GM12878 (cell line): ENCODE measurements at regions of chr20 and their contacts with region 1.

Region 1: GRCh38 chr20:37534401-37535157 is 6.9 kb upstream of the BLCAP start:
- DNase-seq: peak; percentile 90
- ATAC-seq: peak; percentile 98
- H3K4me3 ChIP-seq: no peak overlapping the region
- H3K27ac ChIP-seq: peak overlapping the region; percentile 57
- H3K4me1 ChIP-seq: peaks cover 18% of the 10 kb centered on the region
- H3K27me3 ChIP-seq: no peaks in the 10 kb centered on the region
- CTCF ChIP-seq: peak; percentile 69 to 88 (median 77)
- EP300 ChIP-seq: peak; percentile 47 to 59; a peak in 2 of 4 replicates
- POLR2A ChIP-seq: no peak
- RAD21 ChIP-seq: peak; percentile 97

Region 2: DNA sequence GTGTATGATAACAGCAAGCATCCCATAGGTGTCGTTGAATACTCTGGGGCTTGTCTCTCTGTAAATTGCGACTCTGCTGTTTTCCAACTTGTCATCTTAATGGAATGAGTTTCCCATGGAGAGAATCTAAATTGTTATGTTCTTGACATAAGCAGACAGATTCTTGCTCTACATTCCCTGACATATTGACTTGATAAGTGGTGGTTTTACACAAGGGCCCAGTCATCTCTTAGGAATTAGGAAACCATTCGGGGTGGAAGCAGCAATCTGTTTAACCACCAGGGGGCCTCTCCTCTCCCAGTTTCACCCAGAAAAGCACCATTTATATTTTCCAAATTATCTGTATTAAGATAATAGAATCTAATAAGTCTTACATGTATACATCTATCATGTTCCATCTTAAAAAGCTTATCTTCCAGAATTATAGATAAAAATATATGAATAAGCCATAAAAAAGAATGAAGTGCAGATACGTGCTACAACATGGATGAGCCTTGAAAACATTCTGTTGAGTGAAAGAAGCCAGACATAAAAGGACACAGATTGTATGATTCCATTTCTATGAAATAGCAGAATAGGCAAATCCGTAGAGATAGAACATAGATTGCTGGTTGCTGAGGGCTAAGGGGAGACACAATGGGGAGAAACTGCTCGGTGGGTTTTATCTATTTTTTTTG is 332.2 kb before region 1 on chr20:
- CTCF ChIA-PET with region 1: interaction called, 200 read pairs
- POLR2A ChIA-PET with region 1: no interaction called
- RAD21 ChIA-PET with region 1: interaction called, 4 read pairs
- SMC1A ChIA-PET with region 1: interaction called, 7 read pairs
- in situ Hi-C with region 1: loop called (anchors 5 kb)
- intact Hi-C with region 1: loop called (anchors 1 kb)
- DNase-seq: no peak
- ATAC-seq: peak; percentile 59; the same call in 2 of the 3 replicates
- H3K4me3 ChIP-seq: no peak overlapping the region
- H3K27ac ChIP-seq: no peak overlapping the region
- H3K4me1 ChIP-seq: no peaks in the 10 kb centered on the region
- H3K27me3 ChIP-seq: no peaks in the 10 kb centered on the region
- CTCF ChIP-seq: peak; percentile 43 to 62 (median 56)
- EP300 ChIP-seq: no peak
- POLR2A ChIP-seq: no peak
- RAD21 ChIP-seq: no peak

Region 3: DNA sequence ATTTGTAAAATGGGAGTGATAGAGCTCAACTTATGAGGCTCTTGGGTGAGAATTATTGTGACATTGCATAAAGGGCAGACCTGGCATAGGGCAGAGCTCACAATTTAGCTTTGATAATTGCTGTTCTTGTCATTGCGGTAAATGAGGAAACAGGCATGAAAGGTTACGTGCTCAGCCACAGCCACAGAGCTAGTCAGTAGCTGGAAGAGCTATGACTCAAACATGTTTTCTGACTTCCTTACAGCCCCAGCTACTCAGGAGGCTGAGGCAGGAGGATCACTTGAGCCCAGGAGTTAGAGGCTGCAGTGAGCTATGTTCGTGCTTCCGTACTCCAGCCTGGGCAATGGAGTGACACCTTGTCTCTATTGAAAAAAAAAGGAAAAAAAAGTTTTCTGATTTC is 269.4 kb before region 1 on chr20:
- CTCF ChIA-PET with region 1: interaction called, 282 read pairs
- POLR2A ChIA-PET with region 1: interaction called, 5 read pairs
- RAD21 ChIA-PET with region 1: interaction called, 119 read pairs
- SMC1A ChIA-PET with region 1: interaction called, 129 read pairs
- in situ Hi-C with region 1: loop called (anchors 5 kb)
- intact Hi-C with region 1: loop called (anchors 1 kb)
- DNase-seq: no peak
- ATAC-seq: peak; percentile 87
- H3K4me3 ChIP-seq: no peak overlapping the region
- H3K27ac ChIP-seq: no peak overlapping the region
- H3K4me1 ChIP-seq: peaks cover 14% of the 10 kb centered on the region
- H3K27me3 ChIP-seq: no peaks in the 10 kb centered on the region; a peak in 1 of 4 replicates
- CTCF ChIP-seq: no peak
- EP300 ChIP-seq: 0 out of 4 replicates have a peak, but pooled peaks of 1 of the 2 experiments have one; percentile 51
- POLR2A ChIP-seq: no peak
- RAD21 ChIP-seq: no peak

Region 4: GRCh38 chr20:37457921-37458320 is 76.7 kb before region 1 on chr20:
- CTCF ChIA-PET with region 1: no interaction called
- POLR2A ChIA-PET with region 1: no interaction called
- RAD21 ChIA-PET with region 1: no interaction called
- SMC1A ChIA-PET with region 1: no interaction called
- in situ Hi-C with region 1: no loop called
- intact Hi-C with region 1: no loop called
- DNase-seq: no peak
- ATAC-seq: no peak
- H3K4me3 ChIP-seq: no peak overlapping the region
- H3K27ac ChIP-seq: no peak overlapping the region
- H3K4me1 ChIP-seq: no peaks in the 10 kb centered on the region
- H3K27me3 ChIP-seq: peaks cover 0 to 2% of the 10 kb centered on the region in 2 experiments; a peak in 1 of 4 replicates
- CTCF ChIP-seq: no peak
- EP300 ChIP-seq: no peak
- POLR2A ChIP-seq: no peak
- RAD21 ChIP-seq: no peak

Region 5: GRCh38 chr20:37510226-37510625 is 24.4 kb before region 1 on chr20:
- CTCF ChIA-PET with region 1: interaction called, 11 read pairs
- POLR2A ChIA-PET with region 1: no interaction called
- RAD21 ChIA-PET with region 1: no interaction called
- SMC1A ChIA-PET with region 1: no interaction called
- in situ Hi-C with region 1: no loop called
- intact Hi-C with region 1: no loop called
- DNase-seq: no peak
- ATAC-seq: no peak
- H3K4me3 ChIP-seq: no peak overlapping the region
- H3K27ac ChIP-seq: no peak overlapping the region
- H3K4me1 ChIP-seq: 0 out of 2 replicates have a peak, but pooled peaks cover 3% of the 10 kb centered on the region
- H3K27me3 ChIP-seq: no peaks in the 10 kb centered on the region
- CTCF ChIP-seq: no peak
- EP300 ChIP-seq: no peak
- POLR2A ChIP-seq: no peak
- RAD21 ChIP-seq: no peak

Region 6: DNA sequence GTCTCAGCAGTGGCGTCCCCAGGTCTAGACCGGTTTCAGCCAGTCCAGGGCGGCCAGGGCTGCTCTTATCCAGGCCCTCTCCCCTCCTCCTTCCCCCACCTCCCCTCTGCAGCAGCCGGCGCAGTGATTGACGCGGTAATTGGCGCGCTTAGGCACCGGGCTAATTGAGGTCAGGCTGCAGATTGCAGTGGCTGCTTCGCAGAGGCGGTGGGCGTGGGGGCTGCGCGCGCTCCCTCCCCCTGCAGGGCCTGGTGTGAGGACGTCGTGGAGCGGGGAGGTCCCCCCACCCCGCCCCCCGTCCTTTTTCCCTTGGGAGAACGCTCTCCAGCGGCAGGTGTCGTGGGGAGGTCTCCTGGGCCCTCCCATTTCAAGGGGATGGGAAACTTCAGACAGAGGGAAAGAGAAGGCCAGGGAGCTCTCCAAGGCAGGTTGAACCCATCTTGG is 63.5 kb after region 1 on chr20:
- CTCF ChIA-PET with region 1: no interaction called
- POLR2A ChIA-PET with region 1: no interaction called
- RAD21 ChIA-PET with region 1: no interaction called
- SMC1A ChIA-PET with region 1: no interaction called
- in situ Hi-C with region 1: no loop called
- intact Hi-C with region 1: no loop called
- DNase-seq: no peak
- ATAC-seq: no peak
- H3K4me3 ChIP-seq: no peak overlapping the region
- H3K27ac ChIP-seq: no peak overlapping the region
- H3K4me1 ChIP-seq: no peaks in the 10 kb centered on the region
- H3K27me3 ChIP-seq: peaks cover 0 to 1% of the 10 kb centered on the region in 2 experiments; a peak in 2 of 4 replicates
- CTCF ChIP-seq: no peak
- EP300 ChIP-seq: no peak
- POLR2A ChIP-seq: no peak
- RAD21 ChIP-seq: no peak